Sigmoid colon (tissue), 7 donors: ENCODE measurements at regions of chr20 and their contacts with region 1.

Region 1: DNA sequence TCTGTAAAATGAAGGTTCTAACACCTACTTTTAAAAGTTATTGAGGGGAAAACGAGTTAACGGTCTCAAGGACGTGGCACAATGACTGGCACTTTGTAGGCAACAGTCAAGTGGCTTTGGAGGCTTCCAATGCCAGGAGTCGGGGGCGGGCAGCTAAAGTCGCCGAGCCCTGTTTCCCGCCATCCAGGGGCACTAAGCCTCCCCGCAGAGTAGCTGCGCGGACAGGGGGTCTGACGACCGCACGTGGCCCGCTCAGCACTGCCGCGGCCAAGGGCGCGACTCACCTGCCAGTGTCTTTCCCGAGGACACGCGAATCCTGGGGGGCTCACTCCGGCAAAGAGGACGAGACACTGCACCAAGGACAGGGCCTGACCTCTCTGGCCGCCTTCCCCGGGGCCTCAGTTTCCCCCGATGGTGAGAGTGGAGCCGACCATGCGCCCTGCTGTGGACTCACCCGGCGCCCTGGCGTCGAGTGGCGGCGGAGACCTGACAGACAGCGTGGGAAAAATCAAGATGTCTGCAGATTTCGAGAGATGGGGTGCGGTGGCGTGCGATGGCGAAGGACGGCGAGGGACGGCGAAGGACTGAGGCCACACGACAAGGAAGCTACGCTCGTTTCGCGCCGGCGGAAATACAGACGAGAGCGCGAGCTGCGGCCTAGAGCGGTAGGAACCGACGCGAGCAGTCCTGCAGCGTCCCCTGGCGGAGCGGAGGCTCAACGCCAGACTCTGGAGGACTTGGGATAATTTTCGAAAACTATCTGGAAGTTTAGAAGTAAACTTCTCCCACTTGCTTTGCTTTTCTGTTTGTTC is at the start of gene SNHG17:
- DNase-seq: peak; percentile 93
- H3K4me3 ChIP-seq: peak within 1 kb of the TSS; percentile 59 to 76 (median 66)
- H3K27ac ChIP-seq: peak within 1 kb of the TSS; percentile 79 to 85 (median 81)
- H3K4me1 ChIP-seq: peaks cover 0 to 15% (median 14%) of the 10 kb centered on the region in 4 donors
- H3K27me3 ChIP-seq: no peaks in the 10 kb centered on the region
- CTCF ChIP-seq: peak; percentile 99
- EP300 ChIP-seq: no peak
- POLR2A ChIP-seq: peak; percentile 46 to 63
- total RNA-seq, gene SNHG17: 11.8 to 20.8 (median 15.6) TPM

Region 2: GRCh38 chr20:38395165-38395564 is 39.8 kb before region 1 on chr20:
- intact Hi-C with region 1: no loop called
- DNase-seq: no peak
- H3K4me3 ChIP-seq: no peak overlapping the region
- H3K27ac ChIP-seq: no peak overlapping the region
- H3K4me1 ChIP-seq: peaks cover 0 to 6% (median 0%) of the 10 kb centered on the region in 4 donors
- H3K27me3 ChIP-seq: no peaks in the 10 kb centered on the region
- CTCF ChIP-seq: no peak
- EP300 ChIP-seq: no peak
- POLR2A ChIP-seq: no peak

Region 3: GRCh38 chr20:38472513-38473372 is 37.8 kb after region 1 on chr20 and contains the start of gene RALGAPB:
- intact Hi-C with region 1: loop called (anchors 5 kb)
- DNase-seq: peak; percentile 99
- H3K4me3 ChIP-seq: peak within 1 kb of the TSS; percentile 68 to 87 (median 76)
- H3K27ac ChIP-seq: peak within 1 kb of the TSS; percentile 83 to 92 (median 92)
- H3K4me1 ChIP-seq: peaks cover 0 to 27% (median 21%) of the 10 kb centered on the region in 4 donors
- H3K27me3 ChIP-seq: no peaks in the 10 kb centered on the region
- CTCF ChIP-seq: peak in 1 of 4 experiments; percentile 21
- EP300 ChIP-seq: no peak
- POLR2A ChIP-seq: no peak
- total RNA-seq, gene RALGAPB: 29.3 to 37.9 (median 31.5) TPM